Activated CD8-positive, alpha-beta T cell treated with anti-CD3 and anti-CD28 coated beads for 36 hours (primary cell): ENCODE measurements at regions of chr19 and their contacts with region 1.

Region 1: DNA sequence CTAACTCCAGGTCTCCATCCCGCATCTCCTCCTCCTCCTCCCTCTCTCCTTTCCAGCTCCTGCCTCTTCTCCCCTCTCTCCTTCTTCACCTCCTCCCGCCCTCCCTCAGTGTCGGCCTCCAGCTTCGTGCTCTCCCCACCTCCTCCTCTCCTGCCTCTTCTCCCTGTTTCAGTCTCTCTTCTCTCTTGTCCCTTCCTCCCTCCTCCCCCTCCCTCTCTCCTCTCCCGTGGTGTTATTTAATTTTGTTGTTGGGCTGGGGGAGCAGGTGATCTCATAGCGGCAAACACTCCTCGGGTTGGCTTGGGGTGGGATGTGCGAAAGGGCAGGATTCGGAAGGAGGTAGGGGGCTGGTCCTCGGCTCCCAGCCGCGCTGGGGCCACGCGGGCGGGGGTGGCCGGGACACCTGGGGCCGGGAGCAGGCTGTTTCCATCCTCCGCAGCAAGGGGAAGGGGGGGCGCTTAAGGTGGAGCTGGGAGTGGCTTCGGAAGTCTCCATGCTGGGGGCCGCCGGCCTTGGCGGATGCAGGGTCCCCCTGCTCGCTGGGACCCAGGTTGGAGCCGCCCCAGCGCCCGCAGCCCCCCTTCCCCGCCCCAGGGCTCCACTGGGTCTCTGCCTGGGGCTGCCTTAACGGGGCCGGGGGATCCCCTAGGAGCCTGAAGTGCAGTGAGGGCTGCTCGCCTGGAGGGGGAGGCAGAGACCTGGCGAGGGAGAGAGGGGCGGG is at the start of gene CA11:
- DNase-seq: peak; percentile 94
- ATAC-seq: peak; percentile 92
- H3K4me3 Mint-ChIP-seq: peak within 1 kb of the TSS; percentile 85
- H3K27ac Mint-ChIP-seq: peak within 1 kb of the TSS; percentile 90
- H3K4me1 Mint-ChIP-seq: peaks cover 36% of the 10 kb centered on the region
- H3K27me3 Mint-ChIP-seq: no peaks in the 10 kb centered on the region
- CTCF ChIP-seq: peak; percentile 87
- total RNA-seq, gene CA11: 11.1 to 13.0 TPM

Region 2: GRCh38 chr19:48596679-48597465 is 49.3 kb before region 1 on chr19:
- CTCF ChIA-PET with region 1: no interaction called
- POLR2A ChIA-PET with region 1: no interaction called
- intact Hi-C with region 1: no loop called
- DNase-seq: peak; percentile 70
- ATAC-seq: peak; percentile 79
- H3K4me3 Mint-ChIP-seq: peak overlapping the region; percentile 71
- H3K27ac Mint-ChIP-seq: peak overlapping the region; percentile 87
- H3K4me1 Mint-ChIP-seq: no peaks in the 10 kb centered on the region
- H3K27me3 Mint-ChIP-seq: no peaks in the 10 kb centered on the region
- CTCF ChIP-seq: no peak

Region 3: DNA sequence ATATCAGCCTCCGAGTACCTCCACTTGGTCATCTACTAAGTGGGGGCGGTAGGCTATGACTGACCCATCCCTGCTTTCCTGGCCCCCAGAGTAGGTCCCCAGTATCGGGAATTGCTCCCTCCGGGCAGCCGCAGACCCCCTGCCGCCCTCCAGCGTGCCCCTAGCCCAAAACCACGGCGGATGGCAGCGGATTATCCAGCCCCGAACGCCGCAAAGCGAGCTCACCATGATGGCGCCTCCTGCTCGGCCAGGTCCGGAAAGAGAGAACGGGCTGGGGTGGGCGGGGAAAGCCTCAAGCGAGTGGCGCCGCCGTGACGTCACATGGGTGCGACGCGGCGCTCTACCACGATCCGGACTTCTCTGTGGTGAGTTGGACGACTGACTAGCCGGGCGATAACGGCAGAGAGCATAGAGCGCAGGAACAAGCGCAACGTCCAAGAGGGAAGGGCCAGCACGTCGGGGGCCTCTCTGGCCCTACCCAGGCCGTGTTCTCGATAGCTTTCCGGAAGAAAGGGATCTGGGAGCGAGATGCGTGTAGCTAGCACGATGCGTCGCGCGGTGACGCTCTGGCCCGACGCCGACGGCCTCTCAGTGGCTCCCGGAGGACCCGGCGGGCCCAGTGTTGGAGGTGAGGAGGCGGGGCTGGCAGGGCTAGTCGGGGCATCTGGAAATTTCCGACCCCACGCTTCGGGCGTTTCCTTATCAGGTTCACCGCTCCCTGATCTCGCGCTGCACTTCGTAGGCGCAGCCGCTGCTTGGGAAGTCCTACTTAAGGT is 27.1 kb before region 1 on chr19 and contains the starts of genes RPL18 and SPHK2:
- CTCF ChIA-PET with region 1: interaction called, 5 read pairs
- POLR2A ChIA-PET with region 1: interaction called, 16 read pairs
- intact Hi-C with region 1: no loop called
- DNase-seq: peak; percentile 98
- ATAC-seq: peak; percentile 76
- H3K4me3 Mint-ChIP-seq: peak within 1 kb of the TSS; percentile 93
- H3K27ac Mint-ChIP-seq: peak within 1 kb of the TSS; percentile 100
- H3K4me1 Mint-ChIP-seq: peaks cover 38% of the 10 kb centered on the region
- H3K27me3 Mint-ChIP-seq: no peaks in the 10 kb centered on the region
- CTCF ChIP-seq: no peak
- total RNA-seq, gene RPL18: 2,304 to 2,324 TPM
- total RNA-seq, gene SPHK2: 22.3 to 22.9 TPM

Region 4: DNA sequence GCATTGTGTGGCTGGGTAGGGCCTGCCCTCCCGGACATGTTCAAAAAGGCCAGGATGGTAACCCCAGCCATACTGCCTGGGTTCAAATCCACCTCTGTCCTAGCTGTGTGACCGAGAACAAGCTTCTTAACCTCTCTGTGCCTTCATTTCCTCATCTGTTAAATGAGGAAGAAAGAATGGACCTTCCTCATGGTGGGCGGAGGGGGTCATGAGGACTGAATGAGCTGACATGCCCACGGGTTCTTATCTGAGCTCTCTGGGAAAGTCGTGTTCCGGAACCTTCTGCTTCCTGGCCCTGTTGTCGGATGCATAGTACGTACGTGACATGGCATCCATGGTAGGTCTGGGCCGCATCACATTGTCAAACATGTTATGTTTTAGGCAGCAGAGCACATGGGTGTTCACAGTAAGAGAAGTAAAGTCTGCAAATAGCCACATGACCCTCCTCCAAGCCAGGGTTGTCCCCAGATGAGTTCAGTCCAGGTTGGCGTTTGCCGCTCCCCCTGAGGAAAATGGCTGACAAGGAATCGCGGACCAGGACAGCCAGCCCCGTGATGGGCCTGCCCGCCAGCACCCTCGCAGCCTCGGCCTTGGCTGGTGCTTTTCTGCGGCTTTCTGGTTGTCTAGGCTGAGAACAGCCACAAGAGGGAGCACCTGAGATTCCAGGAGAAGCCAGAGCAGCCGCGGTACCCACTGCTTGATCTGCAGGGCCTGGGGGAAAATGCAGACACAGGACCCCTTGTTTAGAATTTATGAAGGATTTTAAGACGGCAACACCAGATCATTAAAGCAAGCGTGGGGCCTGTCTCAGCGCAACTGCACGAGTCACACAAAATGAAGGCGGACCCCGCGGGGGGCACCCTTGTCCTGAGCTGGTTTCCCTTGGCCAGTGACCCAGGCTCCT is 29.0 kb after region 1 on chr19:
- CTCF ChIA-PET with region 1: interaction called, 17 read pairs
- POLR2A ChIA-PET with region 1: no interaction called
- intact Hi-C with region 1: no loop called
- DNase-seq: peak; percentile 85
- ATAC-seq: peak; percentile 99
- H3K4me3 Mint-ChIP-seq: no peak overlapping the region
- H3K27ac Mint-ChIP-seq: no peak overlapping the region
- H3K4me1 Mint-ChIP-seq: peaks cover 3% of the 10 kb centered on the region
- H3K27me3 Mint-ChIP-seq: no peaks in the 10 kb centered on the region
- CTCF ChIP-seq: peak; percentile 75

Region 5: GRCh38 chr19:48738557-48739399 is 92.6 kb after region 1 on chr19:
- CTCF ChIA-PET with region 1: interaction called, 10 read pairs
- POLR2A ChIA-PET with region 1: no interaction called
- intact Hi-C with region 1: loop called (anchors 10 kb)
- DNase-seq: peak; percentile 96
- ATAC-seq: peak; percentile 93
- H3K4me3 Mint-ChIP-seq: peak overlapping the region; percentile 38
- H3K27ac Mint-ChIP-seq: peak overlapping the region; percentile 32
- H3K4me1 Mint-ChIP-seq: peaks cover 16% of the 10 kb centered on the region
- H3K27me3 Mint-ChIP-seq: peaks cover 6% of the 10 kb centered on the region
- CTCF ChIP-seq: no peak

Region 6: DNA sequence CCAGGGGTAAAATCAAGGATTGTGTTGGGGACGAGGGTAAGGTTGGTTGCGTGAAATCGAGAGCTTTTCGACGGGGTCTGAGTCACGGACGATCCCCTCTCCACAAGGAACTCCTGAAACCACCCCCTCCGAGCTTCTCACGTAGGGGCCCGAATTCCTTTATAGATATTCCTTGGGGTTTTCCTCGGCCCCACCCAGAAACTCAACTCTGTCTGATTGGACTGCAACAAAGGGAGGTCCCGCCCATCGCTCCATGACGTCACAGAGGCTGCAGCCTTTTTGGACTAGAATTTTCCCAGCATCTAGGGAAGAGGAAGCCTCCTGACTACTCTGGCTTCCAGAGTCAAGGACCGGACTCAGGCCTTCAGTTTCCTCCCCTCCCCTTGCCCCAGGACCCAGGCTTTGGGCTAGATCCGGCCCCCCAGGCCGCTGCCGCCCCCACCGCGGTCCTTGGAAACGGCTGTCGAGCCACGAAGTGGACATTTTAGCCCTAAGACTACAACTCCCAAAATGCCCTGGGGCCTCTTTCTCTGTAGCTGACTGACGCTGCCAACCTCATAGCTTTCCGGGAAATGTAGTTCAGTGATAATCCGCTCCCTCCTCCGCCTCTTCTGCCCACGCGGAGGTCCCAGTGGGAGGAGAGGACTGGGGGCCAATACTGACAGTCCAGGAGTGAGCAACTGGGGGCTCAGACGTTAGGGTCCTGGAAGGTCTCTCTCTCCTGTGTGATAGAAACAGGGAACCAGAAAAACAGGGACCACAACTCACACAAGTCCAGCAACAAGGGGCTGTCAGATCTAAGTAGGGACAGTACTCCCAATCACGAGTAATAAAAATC is 100.8 kb after region 1 on chr19 and contains the start of gene IZUMO1:
- CTCF ChIA-PET with region 1: interaction called, 3 read pairs
- POLR2A ChIA-PET with region 1: no interaction called
- intact Hi-C with region 1: loop called (anchors 10 kb)
- DNase-seq: peak; percentile 77
- ATAC-seq: peak; percentile 81
- H3K4me3 Mint-ChIP-seq: no peak within 1 kb of the TSS
- H3K27ac Mint-ChIP-seq: no peak within 1 kb of the TSS
- H3K4me1 Mint-ChIP-seq: peaks cover 6% of the 10 kb centered on the region
- H3K27me3 Mint-ChIP-seq: peaks cover 17% of the 10 kb centered on the region
- CTCF ChIP-seq: no peak
- total RNA-seq, gene IZUMO1: not detected